Pancreas (tissue), 10 donors: ENCODE measurements at regions of chr6 and their contacts with region 1.

Region 1: GRCh38 chr6:74091136-74091793 is 395.3 kb downstream of the CD109 start:
- DNase-seq: peak in 1 of 6 donors; percentile 16
- ATAC-seq: peak in 3 of 4 donors; percentile 67 to 78 (median 68)
- H3K4me3 ChIP-seq: no peak overlapping the region
- H3K27ac ChIP-seq: no peak overlapping the region
- H3K4me1 ChIP-seq: no peaks in the 10 kb centered on the region
- H3K27me3 ChIP-seq: peaks cover 0 to 9% (median 0%) of the 10 kb centered on the region in 4 donors
- CTCF ChIP-seq: peak in 3 of 4 donors; percentile 42 to 69 (median 64)

Region 2: GRCh38 chr6:73653571-73654424 is 437.5 kb before region 1 on chr6 and contains the start of gene SLC17A5:
- intact Hi-C with region 1: no loop called
- DNase-seq: peak; percentile 94 to 96 (median 94)
- ATAC-seq: peak; percentile 92 to 98 (median 96)
- H3K4me3 ChIP-seq: peak within 1 kb of the TSS; percentile 86 to 100 (median 98)
- H3K27ac ChIP-seq: peak within 1 kb of the TSS; percentile 87 to 98 (median 94)
- H3K4me1 ChIP-seq: peaks cover 0 to 12% (median 0%) of the 10 kb centered on the region in 3 donors
- H3K27me3 ChIP-seq: no peaks in the 10 kb centered on the region
- CTCF ChIP-seq: peak in 1 of 4 donors; percentile 0
- total RNA-seq, gene SLC17A5: 4.0 to 11.0 (median 5.4) TPM

Region 3: GRCh38 chr6:73968221-73968757 is 123.0 kb before region 1 on chr6:
- intact Hi-C with region 1: no loop called
- DNase-seq: no peak
- ATAC-seq: no peak
- H3K4me3 ChIP-seq: no peak overlapping the region
- H3K27ac ChIP-seq: no peak overlapping the region
- H3K4me1 ChIP-seq: no peaks in the 10 kb centered on the region
- H3K27me3 ChIP-seq: peaks cover 0 to 4% (median 0%) of the 10 kb centered on the region in 4 donors
- CTCF ChIP-seq: no peak

Region 4: GRCh38 chr6:74137911-74138310 is 46.6 kb after region 1 on chr6:
- intact Hi-C with region 1: no loop called
- DNase-seq: no peak
- ATAC-seq: no peak
- H3K4me3 ChIP-seq: no peak overlapping the region
- H3K27ac ChIP-seq: no peak overlapping the region
- H3K4me1 ChIP-seq: no peaks in the 10 kb centered on the region
- H3K27me3 ChIP-seq: no peaks in the 10 kb centered on the region
- CTCF ChIP-seq: no peak

Region 5: GRCh38 chr6:74170118-74170517 is 78.9 kb after region 1 on chr6:
- intact Hi-C with region 1: no loop called
- DNase-seq: no peak
- ATAC-seq: no peak
- H3K4me3 ChIP-seq: no peak overlapping the region
- H3K27ac ChIP-seq: no peak overlapping the region
- H3K4me1 ChIP-seq: no peaks in the 10 kb centered on the region
- H3K27me3 ChIP-seq: no peaks in the 10 kb centered on the region
- CTCF ChIP-seq: no peak

Region 6: DNA sequence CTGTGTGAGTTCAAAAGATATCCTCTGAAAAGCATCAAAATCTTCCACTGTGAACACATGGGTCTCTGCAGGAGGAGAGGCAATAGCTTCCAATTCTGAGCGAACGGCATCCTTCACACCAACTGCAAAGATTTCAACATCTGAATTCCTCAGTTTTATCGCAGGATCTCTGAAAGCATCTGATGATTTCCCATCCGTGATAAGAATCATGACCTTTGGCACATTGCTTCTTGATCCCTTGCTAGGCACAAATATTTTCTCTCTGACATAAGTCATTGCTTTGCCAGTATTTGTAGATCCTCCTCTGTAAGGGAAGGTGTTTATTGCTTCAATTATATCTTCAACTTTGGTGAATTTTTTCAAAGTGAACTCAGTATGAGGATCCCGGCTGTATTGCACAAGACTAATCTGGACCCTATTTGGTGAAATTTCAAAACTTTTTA is 1091.9 kb after region 1 on chr6:
- intact Hi-C with region 1: loop called in 1 of 3 experiments (anchors 10 kb)
- DNase-seq: no peak
- ATAC-seq: peak in 2 of 4 donors; percentile 25 to 44
- H3K4me3 ChIP-seq: no peak overlapping the region
- H3K27ac ChIP-seq: no peak overlapping the region
- H3K4me1 ChIP-seq: no peaks in the 10 kb centered on the region
- H3K27me3 ChIP-seq: no peaks in the 10 kb centered on the region
- CTCF ChIP-seq: no peak